Transverse colon (tissue), 4 donors: ENCODE measurements at regions of chr18 and their contacts with region 1.

Region 1: GRCh38 chr18:43060020-43060419 is 55.5 kb downstream of the RIT2 start:
- DNase-seq: no peak
- H3K4me3 ChIP-seq: no peak overlapping the region
- H3K27ac ChIP-seq: no peak overlapping the region
- H3K4me1 ChIP-seq: no peaks in the 10 kb centered on the region
- H3K27me3 ChIP-seq: no peaks in the 10 kb centered on the region
- CTCF ChIP-seq: no peak
- EP300 ChIP-seq: no peak
- POLR2A ChIP-seq: no peak

Region 2: DNA sequence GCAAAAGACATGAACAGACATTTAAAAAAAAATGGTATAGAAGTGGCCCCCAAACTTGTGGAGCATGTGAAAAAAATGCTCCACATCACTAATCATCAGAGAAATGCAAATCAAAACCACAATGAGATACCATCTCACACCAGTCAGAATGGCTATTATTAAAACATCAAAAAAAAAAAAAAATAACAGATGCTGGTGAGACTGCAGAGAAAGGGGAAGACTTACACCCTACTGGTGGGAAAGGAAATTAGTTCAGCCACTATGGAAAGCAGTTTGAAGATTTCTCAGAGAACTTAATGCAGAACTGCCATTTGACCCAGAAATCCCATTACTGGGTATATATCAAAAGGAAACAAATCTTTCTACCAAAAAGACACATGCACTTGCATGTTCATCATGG is 109.3 kb before region 1 on chr18:
- in situ Hi-C with region 1: loop called in 1 of 4 experiments (anchors 25 kb)
- intact Hi-C with region 1: no loop called
- DNase-seq: no peak
- H3K4me3 ChIP-seq: no peak overlapping the region
- H3K27ac ChIP-seq: no peak overlapping the region
- H3K4me1 ChIP-seq: no peaks in the 10 kb centered on the region
- H3K27me3 ChIP-seq: no peaks in the 10 kb centered on the region
- CTCF ChIP-seq: no peak
- EP300 ChIP-seq: no peak
- POLR2A ChIP-seq: no peak